ENCODE measurements at regions of chr4 and their contacts with region 1.

Region 1: GRCh38 chr4:173420324-173420752 is 21.4 kb upstream of the SCRG1 start:
- DNase-seq: peak in 4 of 5 donors; percentile 17 to 35 (median 26)
- H3K4me3 ChIP-seq: no peak overlapping the region
- H3K4me3 Mint-ChIP-seq: peak overlapping the region in 1 of 8 donors; percentile 0
- H3K27ac ChIP-seq: no peak overlapping the region
- H3K27ac Mint-ChIP-seq: no peak overlapping the region
- H3K4me1 ChIP-seq: peaks cover 10% of the 10 kb centered on the region
- H3K4me1 Mint-ChIP-seq: peaks cover 11 to 16% (median 14%) of the 10 kb centered on the region in 4 donors
- H3K27me3 ChIP-seq: no peaks in the 10 kb centered on the region
- H3K27me3 Mint-ChIP-seq: no peaks in the 10 kb centered on the region

Region 2: GRCh38 chr4:173025131-173025530 is 395.2 kb before region 1 on chr4:
- CTCF ChIA-PET with region 1: no interaction called
- POLR2A ChIA-PET with region 1: no interaction called
- intact Hi-C with region 1: loop called (anchors 2 kb)
- DNase-seq: peak in 4 of 5 donors; percentile 32 to 42 (median 37)
- H3K4me3 ChIP-seq: no peak overlapping the region
- H3K4me3 Mint-ChIP-seq: no peak overlapping the region
- H3K27ac ChIP-seq: no peak overlapping the region
- H3K27ac Mint-ChIP-seq: no peak overlapping the region
- H3K4me1 ChIP-seq: no peaks in the 10 kb centered on the region
- H3K4me1 Mint-ChIP-seq: peaks cover 0 to 2% (median 0%) of the 10 kb centered on the region in 4 donors
- H3K27me3 ChIP-seq: peaks cover 4% of the 10 kb centered on the region
- H3K27me3 Mint-ChIP-seq: peaks cover 2 to 3% of the 10 kb centered on the region in 2 donors

Region 3: DNA sequence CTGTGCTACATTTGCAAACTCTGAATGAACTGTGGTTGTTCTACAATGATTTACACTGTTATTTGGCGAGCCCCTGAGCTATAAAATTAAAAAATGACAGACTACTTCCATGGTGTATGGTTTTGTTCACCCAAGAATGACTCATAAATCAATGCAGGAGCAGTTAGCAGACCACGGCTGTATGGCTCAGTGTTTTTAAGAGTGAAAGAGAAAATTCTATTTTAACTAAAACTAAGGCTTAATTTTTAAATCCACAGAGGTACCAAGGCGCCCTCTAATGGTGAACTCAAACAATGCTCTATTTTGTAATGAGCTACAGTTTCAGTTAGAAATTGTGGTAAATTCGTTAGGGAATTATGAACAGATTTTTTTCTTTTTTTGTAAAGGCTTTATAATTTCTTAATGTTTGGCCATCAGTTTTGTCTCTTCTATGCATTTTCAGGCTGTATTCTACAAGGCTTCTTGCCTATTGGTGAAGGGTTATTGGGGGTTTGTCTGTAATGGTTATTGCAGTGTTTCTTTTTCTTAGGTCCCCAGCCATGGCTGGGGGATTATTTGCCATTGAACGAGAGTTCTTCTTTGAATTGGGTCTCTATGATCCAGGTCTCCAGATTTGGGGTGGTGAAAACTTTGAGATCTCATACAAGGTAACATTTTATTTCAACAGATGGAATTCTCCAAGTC is 118.7 kb before region 1 on chr4:
- CTCF ChIA-PET with region 1: interaction called, 14 read pairs
- POLR2A ChIA-PET with region 1: no interaction called
- intact Hi-C with region 1: no loop called
- DNase-seq: peak in 4 of 5 donors; percentile 25 to 32 (median 28)
- H3K4me3 ChIP-seq: no peak overlapping the region
- H3K4me3 Mint-ChIP-seq: no peak overlapping the region
- H3K27ac ChIP-seq: no peak overlapping the region
- H3K27ac Mint-ChIP-seq: no peak overlapping the region
- H3K4me1 ChIP-seq: no peaks in the 10 kb centered on the region
- H3K4me1 Mint-ChIP-seq: peaks cover 0 to 6% (median 2%) of the 10 kb centered on the region in 4 donors
- H3K27me3 ChIP-seq: no peaks in the 10 kb centered on the region
- H3K27me3 Mint-ChIP-seq: no peaks in the 10 kb centered on the region

Region 4: GRCh38 chr4:173318648-173319211 is 101.6 kb before region 1 on chr4:
- CTCF ChIA-PET with region 1: interaction called, 295 read pairs
- POLR2A ChIA-PET with region 1: interaction called, 3 read pairs
- intact Hi-C with region 1: loop called (anchors 1 kb)
- DNase-seq: peak in 4 of 5 donors; percentile 28 to 37 (median 31)
- H3K4me3 ChIP-seq: no peak overlapping the region
- H3K4me3 Mint-ChIP-seq: no peak overlapping the region
- H3K27ac ChIP-seq: no peak overlapping the region
- H3K27ac Mint-ChIP-seq: no peak overlapping the region
- H3K4me1 ChIP-seq: no peaks in the 10 kb centered on the region
- H3K4me1 Mint-ChIP-seq: peaks cover 0 to 2% (median under 1%) of the 10 kb centered on the region in 4 donors
- H3K27me3 ChIP-seq: no peaks in the 10 kb centered on the region
- H3K27me3 Mint-ChIP-seq: no peaks in the 10 kb centered on the region

Region 5: GRCh38 chr4:173370477-173371291 is 49.7 kb before region 1 on chr4 and contains the start of gene SAP30:
- CTCF ChIA-PET with region 1: interaction called, 8 read pairs
- POLR2A ChIA-PET with region 1: interaction called, 14 read pairs
- intact Hi-C with region 1: loop called (anchors 5 kb)
- DNase-seq: peak; percentile 90 to 98 (median 94)
- H3K4me3 ChIP-seq: peak within 1 kb of the TSS; percentile 93 to 95
- H3K4me3 Mint-ChIP-seq: peak within 1 kb of the TSS; percentile 98 to 100 (median 99)
- H3K27ac ChIP-seq: peak within 1 kb of the TSS; percentile 68
- H3K27ac Mint-ChIP-seq: peak within 1 kb of the TSS; percentile 81 to 97 (median 96)
- H3K4me1 ChIP-seq: peaks cover 47% of the 10 kb centered on the region
- H3K4me1 Mint-ChIP-seq: peaks cover 14 to 41% (median 29%) of the 10 kb centered on the region in 4 donors
- H3K27me3 ChIP-seq: no peaks in the 10 kb centered on the region
- H3K27me3 Mint-ChIP-seq: no peaks in the 10 kb centered on the region
- total RNA-seq, gene SAP30: 5.6 to 7.0 TPM

Region 6: DNA sequence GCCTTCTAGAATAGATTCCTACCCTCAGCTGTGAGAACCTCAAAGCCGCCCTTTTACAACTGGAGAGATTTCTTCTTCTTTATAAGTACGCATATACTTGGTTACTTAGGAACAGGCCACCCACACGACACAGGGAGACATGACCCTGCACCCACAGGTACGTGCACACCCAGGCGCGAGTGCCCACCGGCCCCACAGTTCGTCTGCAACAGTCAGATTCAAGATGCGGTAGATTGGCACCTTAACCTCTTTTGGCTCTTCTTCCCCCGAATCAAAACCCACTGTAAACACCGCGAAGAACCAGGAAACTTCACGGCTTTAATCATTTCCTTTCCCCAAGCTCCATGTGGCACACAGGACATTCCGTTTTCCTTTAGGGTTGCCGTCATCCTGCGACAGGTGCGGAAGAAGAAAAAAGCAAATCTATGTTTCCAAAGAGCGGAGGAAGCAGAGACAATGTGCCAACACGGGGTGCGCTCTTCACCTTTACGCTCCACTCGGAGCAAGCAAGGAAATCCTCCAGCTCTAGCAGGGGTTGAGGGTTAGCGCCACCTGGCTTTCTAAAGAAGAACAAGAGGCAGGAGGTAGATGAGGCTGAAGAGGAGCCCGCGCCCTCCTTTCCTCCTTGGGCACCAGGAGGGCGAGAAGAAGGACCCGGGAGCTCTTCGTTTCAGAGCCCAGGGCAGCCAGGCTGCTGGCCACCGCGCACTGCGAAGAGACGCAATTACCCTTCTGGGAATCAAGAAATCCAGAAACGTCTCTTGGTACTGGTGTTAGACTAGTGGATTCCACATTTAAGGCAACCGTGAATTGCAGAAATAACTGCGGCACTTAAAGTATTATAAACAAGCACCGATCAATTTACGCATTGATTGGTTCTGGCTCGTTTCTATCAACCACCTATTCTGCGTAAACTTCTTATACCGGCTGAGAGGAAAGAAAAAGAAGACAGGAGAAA is 74.0 kb after region 1 on chr4:
- CTCF ChIA-PET with region 1: interaction called, 148 read pairs
- POLR2A ChIA-PET with region 1: interaction called, 7 read pairs
- intact Hi-C with region 1: loop called (anchors 1 kb)
- DNase-seq: peak; percentile 60 to 71 (median 66)
- H3K4me3 ChIP-seq: peak overlapping the region; percentile 46 to 54
- H3K4me3 Mint-ChIP-seq: peak overlapping the region; percentile 85 to 94 (median 88)
- H3K27ac ChIP-seq: no peak overlapping the region
- H3K27ac Mint-ChIP-seq: peak overlapping the region in 3 of 7 donors; percentile 19 to 66 (median 32)
- H3K4me1 ChIP-seq: peaks cover 11% of the 10 kb centered on the region
- H3K4me1 Mint-ChIP-seq: peaks cover 11 to 28% (median 18%) of the 10 kb centered on the region in 4 donors
- H3K27me3 ChIP-seq: no peaks in the 10 kb centered on the region
- H3K27me3 Mint-ChIP-seq: peaks cover 15 to 19% of the 10 kb centered on the region in 2 donors

Region 7: GRCh38 chr4:173565281-173565680 is 144.9 kb after region 1 on chr4:
- CTCF ChIA-PET with region 1: no interaction called
- POLR2A ChIA-PET with region 1: no interaction called
- intact Hi-C with region 1: no loop called
- DNase-seq: no peak
- H3K4me3 ChIP-seq: no peak overlapping the region
- H3K4me3 Mint-ChIP-seq: no peak overlapping the region
- H3K27ac ChIP-seq: no peak overlapping the region
- H3K27ac Mint-ChIP-seq: no peak overlapping the region
- H3K4me1 ChIP-seq: no peaks in the 10 kb centered on the region
- H3K4me1 Mint-ChIP-seq: no peaks in the 10 kb centered on the region
- H3K27me3 ChIP-seq: no peaks in the 10 kb centered on the region
- H3K27me3 Mint-ChIP-seq: peaks cover 10 to 11% of the 10 kb centered on the region in 2 donors

Region 8: DNA sequence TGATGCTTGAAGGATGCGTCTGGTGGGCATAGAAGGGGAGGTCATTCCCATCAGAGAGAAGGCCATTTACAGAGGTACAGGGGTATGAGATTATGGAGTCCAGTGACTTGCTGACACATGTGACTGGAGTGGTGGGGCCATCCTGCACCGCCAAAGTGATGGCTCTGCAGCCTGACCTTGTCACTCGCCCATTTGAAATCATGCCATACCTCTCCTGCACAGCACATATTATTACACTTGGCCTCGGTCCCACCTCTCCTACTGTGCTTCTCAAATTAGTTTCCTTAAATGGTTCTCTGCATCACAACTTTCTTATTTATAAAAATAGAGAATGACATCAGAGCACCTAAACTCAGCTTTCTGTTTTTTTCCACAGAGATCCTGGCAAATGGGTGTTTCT is 170.4 kb after region 1 on chr4:
- CTCF ChIA-PET with region 1: no interaction called
- POLR2A ChIA-PET with region 1: no interaction called
- intact Hi-C with region 1: no loop called
- DNase-seq: no peak
- H3K4me3 ChIP-seq: no peak overlapping the region
- H3K4me3 Mint-ChIP-seq: no peak overlapping the region
- H3K27ac ChIP-seq: no peak overlapping the region
- H3K27ac Mint-ChIP-seq: no peak overlapping the region
- H3K4me1 ChIP-seq: no peaks in the 10 kb centered on the region
- H3K4me1 Mint-ChIP-seq: no peaks in the 10 kb centered on the region
- H3K27me3 ChIP-seq: no peaks in the 10 kb centered on the region
- H3K27me3 Mint-ChIP-seq: peaks cover 4 to 7% of the 10 kb centered on the region in 2 donors

Region 9: GRCh38 chr4:173707658-173708419 is 287.5 kb after region 1 on chr4:
- CTCF ChIA-PET with region 1: no interaction called
- POLR2A ChIA-PET with region 1: no interaction called
- intact Hi-C with region 1: no loop called
- DNase-seq: no peak
- H3K4me3 ChIP-seq: no peak overlapping the region
- H3K4me3 Mint-ChIP-seq: no peak overlapping the region
- H3K27ac ChIP-seq: no peak overlapping the region
- H3K27ac Mint-ChIP-seq: no peak overlapping the region
- H3K4me1 ChIP-seq: no peaks in the 10 kb centered on the region
- H3K4me1 Mint-ChIP-seq: no peaks in the 10 kb centered on the region
- H3K27me3 ChIP-seq: no peaks in the 10 kb centered on the region
- H3K27me3 Mint-ChIP-seq: peaks cover 2% of the 10 kb centered on the region in 2 donors

Measured in CD4-positive, alpha-beta memory T cell (primary cell).